ENCODE measurements at regions of chr11 and their contacts with region 1.

Region 1: GRCh38 chr11:84146826-84147225 is 860.7 kb upstream of the CCDC90B start:
- DNase-seq: no peak
- ATAC-seq: peak; percentile 34; the same call in 1 of the 3 replicates
- H3K4me3 ChIP-seq: no peak overlapping the region
- H3K27ac ChIP-seq: no peak overlapping the region
- H3K4me1 ChIP-seq: no peaks in the 10 kb centered on the region
- H3K27me3 ChIP-seq: no peaks in the 10 kb centered on the region
- CTCF ChIP-seq: no peak
- EP300 ChIP-seq: no peak
- POLR2A ChIP-seq: no peak
- RAD21 ChIP-seq: no peak

Region 2: GRCh38 chr11:83971063-83971462 is 175.8 kb before region 1 on chr11:
- CTCF ChIA-PET with region 1: no interaction called
- POLR2A ChIA-PET with region 1: no interaction called
- in situ Hi-C with region 1: no loop called
- intact Hi-C with region 1: no loop called
- DNase-seq: no peak
- ATAC-seq: no peak
- H3K4me3 ChIP-seq: no peak overlapping the region
- H3K27ac ChIP-seq: no peak overlapping the region
- H3K4me1 ChIP-seq: no peaks in the 10 kb centered on the region
- H3K27me3 ChIP-seq: no peaks in the 10 kb centered on the region; a peak in 1 of 5 replicates
- CTCF ChIP-seq: no peak
- EP300 ChIP-seq: no peak
- POLR2A ChIP-seq: no peak
- RAD21 ChIP-seq: no peak

Region 3: DNA sequence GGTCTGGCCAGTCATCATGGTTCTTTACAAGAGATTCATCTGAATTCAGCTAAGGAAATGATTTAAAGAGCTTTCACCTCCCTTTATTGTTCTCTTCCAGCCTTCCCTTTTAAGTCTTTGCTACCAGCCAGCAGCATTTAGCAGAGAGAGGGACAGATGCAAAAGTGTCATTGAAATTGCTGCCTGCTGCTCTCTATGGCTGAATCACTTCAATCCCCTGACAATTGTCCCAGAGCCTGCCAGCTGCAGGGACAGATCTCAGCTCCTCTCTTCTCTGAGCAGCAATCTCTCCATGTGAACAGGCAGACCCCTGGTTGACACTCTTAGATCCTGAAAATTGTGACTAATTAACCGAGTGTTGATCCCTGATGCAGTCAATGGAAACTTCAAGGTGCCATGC is 43.7 kb before region 1 on chr11:
- CTCF ChIA-PET with region 1: no interaction called
- POLR2A ChIA-PET with region 1: no interaction called
- in situ Hi-C with region 1: no loop called
- intact Hi-C with region 1: loop called (anchors 1 kb)
- DNase-seq: no peak
- ATAC-seq: no peak
- H3K4me3 ChIP-seq: no peak overlapping the region
- H3K27ac ChIP-seq: no peak overlapping the region
- H3K4me1 ChIP-seq: 0 out of 2 replicates have a peak, but pooled peaks cover 6% of the 10 kb centered on the region
- H3K27me3 ChIP-seq: no peaks in the 10 kb centered on the region
- CTCF ChIP-seq: no peak
- EP300 ChIP-seq: no peak
- POLR2A ChIP-seq: no peak
- RAD21 ChIP-seq: no peak

Region 4: DNA sequence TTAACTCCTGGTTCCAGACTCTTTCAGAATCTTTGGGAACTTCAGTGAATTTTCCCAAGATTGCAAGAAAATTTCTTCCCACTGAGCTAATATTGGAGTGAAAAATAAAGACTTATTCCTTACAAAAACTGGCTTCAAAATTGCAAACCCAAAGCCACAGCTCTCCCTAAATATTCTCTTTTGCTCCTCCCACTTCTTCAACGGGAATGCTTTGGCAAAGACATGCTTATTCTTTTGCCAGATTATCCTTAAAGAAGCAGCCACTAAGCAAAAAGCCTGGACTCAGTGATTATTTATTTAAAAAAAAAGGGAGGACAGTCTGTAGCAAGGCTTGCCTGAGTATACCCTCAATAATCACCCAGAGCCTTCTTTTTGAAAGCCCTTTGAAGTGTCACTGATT is 41.7 kb after region 1 on chr11:
- CTCF ChIA-PET with region 1: no interaction called
- POLR2A ChIA-PET with region 1: no interaction called
- in situ Hi-C with region 1: no loop called
- intact Hi-C with region 1: no loop called
- DNase-seq: no peak
- ATAC-seq: no peak
- H3K4me3 ChIP-seq: no peak overlapping the region
- H3K27ac ChIP-seq: no peak overlapping the region
- H3K4me1 ChIP-seq: no peaks in the 10 kb centered on the region
- H3K27me3 ChIP-seq: no peaks in the 10 kb centered on the region
- CTCF ChIP-seq: no peak
- EP300 ChIP-seq: no peak
- POLR2A ChIP-seq: no peak
- RAD21 ChIP-seq: no peak